ENCODE measurements at regions of chr3 and their contacts with region 1.

Region 1: GRCh38 chr3:148075763-148076716 is 621.7 kb upstream of the AGTR1 start:
- DNase-seq: peak; percentile 75
- H3K4me3 ChIP-seq: no peak overlapping the region
- H3K27ac ChIP-seq: no peak overlapping the region
- H3K4me1 ChIP-seq: peaks cover 38% of the 10 kb centered on the region
- H3K27me3 ChIP-seq: no peaks in the 10 kb centered on the region
- CTCF ChIP-seq: peak; percentile 87

Region 2: GRCh38 chr3:146817704-146818103 is 1258.3 kb before region 1 on chr3:
- CTCF ChIA-PET with region 1: no interaction called
- POLR2A ChIA-PET with region 1: no interaction called
- intact Hi-C with region 1: loop called (anchors 5 kb)
- DNase-seq: peak; percentile 86
- H3K4me3 ChIP-seq: no peak overlapping the region
- H3K27ac ChIP-seq: no peak overlapping the region
- H3K4me1 ChIP-seq: peaks cover 22% of the 10 kb centered on the region
- H3K27me3 ChIP-seq: no peaks in the 10 kb centered on the region
- CTCF ChIP-seq: peak; percentile 68

Region 3: GRCh38 chr3:147616998-147617619 is 458.9 kb before region 1 on chr3:
- CTCF ChIA-PET with region 1: no interaction called
- POLR2A ChIA-PET with region 1: no interaction called
- intact Hi-C with region 1: loop called (anchors 2 kb)
- DNase-seq: peak; percentile 62
- H3K4me3 ChIP-seq: no peak overlapping the region
- H3K27ac ChIP-seq: no peak overlapping the region
- H3K4me1 ChIP-seq: peaks cover 22% of the 10 kb centered on the region
- H3K27me3 ChIP-seq: no peaks in the 10 kb centered on the region
- CTCF ChIP-seq: peak; percentile 77

Region 4: GRCh38 chr3:147838650-147839049 is 237.4 kb before region 1 on chr3:
- CTCF ChIA-PET with region 1: no interaction called
- POLR2A ChIA-PET with region 1: no interaction called
- intact Hi-C with region 1: loop called (anchors 5 kb)
- DNase-seq: peak; percentile 55
- H3K4me3 ChIP-seq: no peak overlapping the region
- H3K27ac ChIP-seq: no peak overlapping the region
- H3K4me1 ChIP-seq: no peaks in the 10 kb centered on the region
- H3K27me3 ChIP-seq: no peaks in the 10 kb centered on the region
- CTCF ChIP-seq: peak; percentile 47; the same call in 1 of the 2 replicates

Region 5: GRCh38 chr3:148366743-148367410 is 290.8 kb after region 1 on chr3:
- CTCF ChIA-PET with region 1: no interaction called
- POLR2A ChIA-PET with region 1: no interaction called
- intact Hi-C with region 1: loop called (anchors 10 kb)
- DNase-seq: peak; percentile 35
- H3K4me3 ChIP-seq: no peak overlapping the region
- H3K27ac ChIP-seq: no peak overlapping the region
- H3K4me1 ChIP-seq: no peaks in the 10 kb centered on the region
- H3K27me3 ChIP-seq: no peaks in the 10 kb centered on the region
- CTCF ChIP-seq: peak; percentile 44; the same call in 1 of the 2 replicates

Region 6: DNA sequence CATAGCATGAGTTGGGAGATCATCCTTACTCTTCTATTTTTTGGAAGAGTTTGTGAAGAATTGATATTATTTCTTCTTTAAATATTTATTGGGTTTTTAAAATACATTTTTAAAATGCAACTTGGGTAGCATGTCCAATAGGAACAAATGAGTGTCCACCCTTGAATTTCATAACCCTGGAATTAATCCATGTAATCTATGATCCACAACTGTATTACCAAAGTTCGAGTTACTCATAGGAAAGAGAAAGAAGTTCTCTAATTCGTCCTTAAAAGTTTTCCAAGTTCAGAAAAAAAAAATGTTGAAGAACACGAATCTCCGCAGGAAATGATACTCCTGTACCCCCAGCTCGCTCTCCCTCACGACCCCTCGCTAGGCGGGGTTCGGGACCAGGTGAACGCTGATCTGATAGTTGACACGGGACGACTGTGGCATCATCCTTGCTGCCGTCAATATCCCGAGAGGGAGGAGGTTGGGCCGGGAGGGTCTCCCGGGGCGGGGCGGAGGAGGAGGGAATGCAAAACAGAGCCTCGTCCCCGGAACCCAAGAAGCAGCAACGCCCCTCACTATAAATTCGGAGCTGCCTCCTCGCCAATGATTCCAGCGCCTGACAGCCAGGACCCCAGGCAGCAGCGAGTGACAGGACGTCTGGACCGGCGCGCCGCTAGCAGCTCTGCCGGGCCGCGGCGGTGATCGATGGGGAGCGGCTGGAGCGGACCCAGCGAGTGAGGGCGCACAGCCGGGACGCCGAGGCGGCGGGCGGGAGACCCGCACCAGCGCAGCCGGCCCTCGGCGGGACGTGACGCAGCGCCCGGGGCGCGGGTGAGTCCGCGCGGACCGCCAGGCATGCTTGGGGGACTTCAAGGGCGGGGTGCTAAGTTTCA is 621.5 kb after region 1 on chr3 and contains the start of gene AGTR1:
- CTCF ChIA-PET with region 1: no interaction called
- POLR2A ChIA-PET with region 1: no interaction called
- intact Hi-C with region 1: no loop called
- DNase-seq: peak; percentile 29
- H3K4me3 ChIP-seq: peak within 1 kb of the TSS; percentile 30
- H3K27ac ChIP-seq: no peak within 1 kb of the TSS
- H3K4me1 ChIP-seq: no peaks in the 10 kb centered on the region
- H3K27me3 ChIP-seq: peaks cover 79% of the 10 kb centered on the region
- CTCF ChIP-seq: no peak
- total RNA-seq, gene AGTR1: not detected in 2 replicates

Region 7: DNA sequence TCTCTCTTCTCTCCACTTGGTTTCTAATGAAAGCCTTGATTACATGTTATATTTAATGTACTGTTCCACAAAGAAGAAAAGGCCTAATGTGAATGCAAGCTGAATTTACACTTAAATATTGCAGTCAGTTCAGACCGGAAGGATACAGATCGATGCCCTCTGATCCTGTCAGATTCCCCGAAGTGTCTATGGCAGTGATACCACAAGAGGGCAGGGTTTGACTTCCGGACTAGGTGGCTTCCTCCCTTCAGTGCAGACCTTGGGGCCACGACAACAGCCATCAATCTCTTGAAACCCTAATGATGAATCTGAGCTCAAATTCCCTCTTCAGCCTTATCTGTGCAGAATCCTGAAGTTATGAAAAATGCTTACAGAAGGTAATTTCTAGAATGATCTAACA is 651.2 kb after region 1 on chr3:
- CTCF ChIA-PET with region 1: no interaction called
- POLR2A ChIA-PET with region 1: no interaction called
- intact Hi-C with region 1: no loop called
- DNase-seq: peak; percentile 57
- H3K4me3 ChIP-seq: no peak overlapping the region
- H3K27ac ChIP-seq: no peak overlapping the region
- H3K4me1 ChIP-seq: no peaks in the 10 kb centered on the region
- H3K27me3 ChIP-seq: no peaks in the 10 kb centered on the region
- CTCF ChIP-seq: peak; percentile 54

Measured in A673 (cell line).